Endothelial cell of umbilical vein (primary cell): ENCODE measurements at regions of chr3 and their contacts with region 1.

Region 1: GRCh38 chr3:87350364-87351199 is 74.2 kb upstream of the POU1F1 start:
- DNase-seq: peak; percentile 67
- H3K4me3 ChIP-seq: no peak overlapping the region
- H3K27ac ChIP-seq: no peak overlapping the region
- H3K4me1 ChIP-seq: no peaks in the 10 kb centered on the region
- H3K27me3 ChIP-seq: no peaks in the 10 kb centered on the region
- CTCF ChIP-seq: peak; percentile 71 to 78
- POLR2A ChIP-seq: no peak

Region 2: GRCh38 chr3:87260270-87260669 is 90.3 kb before region 1 on chr3:
- CTCF ChIA-PET with region 1: interaction called, 22 read pairs
- POLR2A ChIA-PET with region 1: no interaction called
- dilution Hi-C with region 1: no loop called
- intact Hi-C with region 1: loop called (anchors 1 kb)
- DNase-seq: peak; percentile 66
- H3K4me3 ChIP-seq: no peak overlapping the region
- H3K27ac ChIP-seq: no peak overlapping the region
- H3K4me1 ChIP-seq: no peaks in the 10 kb centered on the region
- H3K27me3 ChIP-seq: no peaks in the 10 kb centered on the region
- CTCF ChIP-seq: peak; percentile 53 to 59
- POLR2A ChIP-seq: no peak

Region 3: DNA sequence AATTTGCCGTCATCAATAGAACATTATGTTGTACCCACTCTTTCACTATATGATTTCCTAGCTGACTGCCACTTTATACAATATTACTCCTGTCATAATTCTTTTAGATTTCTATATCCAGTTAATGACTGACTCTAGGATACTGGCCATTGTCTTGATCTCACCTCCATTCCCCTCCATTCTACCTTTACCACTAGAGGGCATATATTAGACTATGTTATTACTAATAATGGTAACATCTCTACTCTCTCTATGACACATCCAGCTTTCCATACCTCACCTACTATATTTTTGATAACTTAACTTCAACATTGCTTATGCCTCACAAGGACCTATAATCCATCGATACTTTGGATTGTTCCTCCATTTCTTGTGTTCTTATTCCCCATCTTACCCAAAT is 42.8 kb before region 1 on chr3:
- CTCF ChIA-PET with region 1: interaction called, 18 read pairs
- POLR2A ChIA-PET with region 1: no interaction called
- dilution Hi-C with region 1: no loop called
- intact Hi-C with region 1: no loop called
- DNase-seq: no peak
- H3K4me3 ChIP-seq: no peak overlapping the region
- H3K27ac ChIP-seq: no peak overlapping the region
- H3K4me1 ChIP-seq: no peaks in the 10 kb centered on the region
- H3K27me3 ChIP-seq: no peaks in the 10 kb centered on the region
- CTCF ChIP-seq: peak in 1 of 2 donors; percentile 12
- POLR2A ChIP-seq: no peak

Region 4: DNA sequence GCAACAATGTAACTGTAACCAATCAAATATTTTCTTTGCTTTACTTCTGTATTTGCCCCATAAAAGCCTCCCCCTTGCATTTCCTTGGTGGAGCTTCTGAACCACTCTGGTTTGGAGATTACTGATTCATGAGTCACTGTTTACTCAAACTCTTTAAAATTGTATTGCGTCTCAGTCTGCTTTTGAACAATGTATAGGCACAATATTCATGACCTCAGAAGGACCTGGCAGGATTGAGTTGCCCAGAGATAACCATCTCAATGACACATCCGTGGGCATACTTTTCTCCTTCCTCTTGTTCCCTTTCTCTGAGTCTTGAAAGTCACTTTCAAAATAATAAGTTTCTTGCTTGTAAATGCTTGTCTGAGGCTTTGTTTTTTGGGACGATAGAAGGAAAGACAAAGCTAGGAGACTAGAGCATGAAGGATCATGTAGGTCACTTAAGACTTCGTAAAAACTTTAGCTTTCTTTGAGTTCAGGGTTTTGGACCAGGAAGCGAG is 17.1 kb before region 1 on chr3:
- CTCF ChIA-PET with region 1: interaction called, 54 read pairs
- POLR2A ChIA-PET with region 1: no interaction called
- dilution Hi-C with region 1: no loop called
- intact Hi-C with region 1: no loop called
- DNase-seq: peak; percentile 91
- H3K4me3 ChIP-seq: peak overlapping the region in 1 of 3 experiments; percentile 25
- H3K27ac ChIP-seq: peak overlapping the region; percentile 97
- H3K4me1 ChIP-seq: peaks cover 40% of the 10 kb centered on the region
- H3K27me3 ChIP-seq: no peaks in the 10 kb centered on the region
- CTCF ChIP-seq: no peak
- POLR2A ChIP-seq: peak; percentile 28

Region 5: GRCh38 chr3:87390821-87391220 is 40.2 kb after region 1 on chr3:
- CTCF ChIA-PET with region 1: interaction called, 6 read pairs
- POLR2A ChIA-PET with region 1: no interaction called
- dilution Hi-C with region 1: no loop called
- intact Hi-C with region 1: loop called (anchors 5 kb)
- DNase-seq: peak; percentile 16
- H3K4me3 ChIP-seq: no peak overlapping the region
- H3K27ac ChIP-seq: no peak overlapping the region
- H3K4me1 ChIP-seq: peaks cover 7% of the 10 kb centered on the region
- H3K27me3 ChIP-seq: no peaks in the 10 kb centered on the region
- CTCF ChIP-seq: no peak
- POLR2A ChIP-seq: no peak

Region 6: GRCh38 chr3:87498358-87499080 is 147.9 kb after region 1 on chr3:
- CTCF ChIA-PET with region 1: interaction called, 110 read pairs
- POLR2A ChIA-PET with region 1: no interaction called
- dilution Hi-C with region 1: no loop called
- intact Hi-C with region 1: no loop called
- DNase-seq: no peak
- H3K4me3 ChIP-seq: no peak overlapping the region
- H3K27ac ChIP-seq: no peak overlapping the region
- H3K4me1 ChIP-seq: no peaks in the 10 kb centered on the region
- H3K27me3 ChIP-seq: peaks cover 0 to 2% of the 10 kb centered on the region in 2 experiments
- CTCF ChIP-seq: no peak
- POLR2A ChIP-seq: no peak

Region 7: DNA sequence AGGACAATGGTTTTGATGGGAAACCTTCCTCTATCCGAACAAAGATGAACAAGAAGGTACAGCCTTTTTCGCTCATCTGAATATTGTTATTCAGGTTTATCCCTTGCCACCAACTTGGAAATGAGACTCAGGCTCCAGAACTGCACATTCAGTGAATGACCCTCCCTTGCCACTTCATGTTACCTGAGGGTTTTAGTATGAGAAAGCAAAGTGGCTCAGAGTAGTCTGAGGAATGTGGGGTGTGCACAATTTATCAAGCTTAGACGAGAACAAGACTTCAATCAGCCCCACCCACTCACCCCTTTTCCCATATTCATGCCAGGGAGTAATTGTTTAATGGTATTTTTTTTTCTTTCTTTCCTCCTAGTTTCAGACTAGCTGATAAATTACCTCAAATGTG is 191.1 kb after region 1 on chr3:
- CTCF ChIA-PET with region 1: no interaction called
- POLR2A ChIA-PET with region 1: no interaction called
- dilution Hi-C with region 1: no loop called
- intact Hi-C with region 1: no loop called
- DNase-seq: no peak
- H3K4me3 ChIP-seq: no peak overlapping the region
- H3K27ac ChIP-seq: no peak overlapping the region
- H3K4me1 ChIP-seq: no peaks in the 10 kb centered on the region
- H3K27me3 ChIP-seq: no peaks in the 10 kb centered on the region
- CTCF ChIP-seq: no peak
- POLR2A ChIP-seq: no peak

Region 8: GRCh38 chr3:88123526-88123925 is 772.9 kb after region 1 on chr3:
- CTCF ChIA-PET with region 1: interaction called, 3 read pairs
- POLR2A ChIA-PET with region 1: no interaction called
- dilution Hi-C with region 1: no loop called
- intact Hi-C with region 1: loop called (anchors 5 kb)
- DNase-seq: no peak
- H3K4me3 ChIP-seq: no peak overlapping the region
- H3K27ac ChIP-seq: no peak overlapping the region
- H3K4me1 ChIP-seq: no peaks in the 10 kb centered on the region
- H3K27me3 ChIP-seq: no peaks in the 10 kb centered on the region
- CTCF ChIP-seq: no peak
- POLR2A ChIP-seq: no peak